Esophagus muscularis mucosa (tissue), 4 donors: ENCODE measurements at regions of chr7 and their contacts with region 1.

Region 1: GRCh38 chr7:89334797-89335196 is 539.3 kb upstream of the TEX47 start:
- DNase-seq: no peak
- H3K4me3 ChIP-seq: no peak overlapping the region
- H3K27ac ChIP-seq: no peak overlapping the region
- H3K4me1 ChIP-seq: no peaks in the 10 kb centered on the region
- H3K27me3 ChIP-seq: no peaks in the 10 kb centered on the region
- CTCF ChIP-seq: no peak
- EP300 ChIP-seq: no peak
- POLR2A ChIP-seq: no peak

Region 2: GRCh38 chr7:88789480-88790064 is 545.2 kb before region 1 on chr7:
- intact Hi-C with region 1: no loop called
- DNase-seq: no peak
- H3K4me3 ChIP-seq: no peak overlapping the region
- H3K27ac ChIP-seq: no peak overlapping the region
- H3K4me1 ChIP-seq: no peaks in the 10 kb centered on the region
- H3K27me3 ChIP-seq: no peaks in the 10 kb centered on the region
- CTCF ChIP-seq: peak; percentile 10 to 44 (median 38)
- EP300 ChIP-seq: no peak
- POLR2A ChIP-seq: no peak

Region 3: GRCh38 chr7:89607792-89608191 is 273.0 kb after region 1 on chr7:
- intact Hi-C with region 1: loop called (anchors 10 kb)
- DNase-seq: no peak
- H3K4me3 ChIP-seq: no peak overlapping the region
- H3K27ac ChIP-seq: no peak overlapping the region
- H3K4me1 ChIP-seq: no peaks in the 10 kb centered on the region
- H3K27me3 ChIP-seq: no peaks in the 10 kb centered on the region
- CTCF ChIP-seq: no peak
- EP300 ChIP-seq: no peak
- POLR2A ChIP-seq: no peak